ENCODE measurements at regions of chr4 and their contacts with region 1.

Region 1: GRCh38 chr4:42282081-42282901 is 115.0 kb upstream of the SHISA3 start:
- DNase-seq: peak; percentile 44
- H3K4me3 Mint-ChIP-seq: no peak overlapping the region
- H3K27ac Mint-ChIP-seq: no peak overlapping the region
- H3K4me1 Mint-ChIP-seq: no peaks in the 10 kb centered on the region
- H3K27me3 Mint-ChIP-seq: no peaks in the 10 kb centered on the region
- CTCF ChIP-seq: peak; percentile 34

Region 2: DNA sequence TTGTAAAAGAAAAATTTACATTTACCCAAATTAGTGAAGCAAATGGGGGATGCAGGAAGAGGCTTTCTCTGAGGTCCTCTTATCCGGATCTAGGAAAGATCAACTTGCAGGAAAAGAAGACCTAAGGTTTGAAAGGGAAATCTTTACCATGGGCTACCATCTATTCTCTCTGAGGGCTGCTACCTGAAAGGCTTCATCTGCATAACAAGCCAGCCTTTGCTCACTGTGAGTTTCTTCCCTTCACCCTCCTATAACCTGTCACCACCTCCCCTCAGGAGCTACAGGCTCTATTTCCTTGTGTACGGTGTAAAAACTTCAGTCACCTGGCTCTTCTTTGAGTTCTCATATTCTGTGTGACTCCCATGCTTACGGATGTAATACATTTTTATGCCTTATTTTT is 11.2 kb before region 1 on chr4:
- CTCF ChIA-PET with region 1: interaction called, 10 read pairs
- intact Hi-C with region 1: no loop called
- DNase-seq: no peak
- H3K4me3 Mint-ChIP-seq: no peak overlapping the region
- H3K27ac Mint-ChIP-seq: no peak overlapping the region
- H3K4me1 Mint-ChIP-seq: no peaks in the 10 kb centered on the region
- H3K27me3 Mint-ChIP-seq: no peaks in the 10 kb centered on the region
- CTCF ChIP-seq: no peak

Region 3: DNA sequence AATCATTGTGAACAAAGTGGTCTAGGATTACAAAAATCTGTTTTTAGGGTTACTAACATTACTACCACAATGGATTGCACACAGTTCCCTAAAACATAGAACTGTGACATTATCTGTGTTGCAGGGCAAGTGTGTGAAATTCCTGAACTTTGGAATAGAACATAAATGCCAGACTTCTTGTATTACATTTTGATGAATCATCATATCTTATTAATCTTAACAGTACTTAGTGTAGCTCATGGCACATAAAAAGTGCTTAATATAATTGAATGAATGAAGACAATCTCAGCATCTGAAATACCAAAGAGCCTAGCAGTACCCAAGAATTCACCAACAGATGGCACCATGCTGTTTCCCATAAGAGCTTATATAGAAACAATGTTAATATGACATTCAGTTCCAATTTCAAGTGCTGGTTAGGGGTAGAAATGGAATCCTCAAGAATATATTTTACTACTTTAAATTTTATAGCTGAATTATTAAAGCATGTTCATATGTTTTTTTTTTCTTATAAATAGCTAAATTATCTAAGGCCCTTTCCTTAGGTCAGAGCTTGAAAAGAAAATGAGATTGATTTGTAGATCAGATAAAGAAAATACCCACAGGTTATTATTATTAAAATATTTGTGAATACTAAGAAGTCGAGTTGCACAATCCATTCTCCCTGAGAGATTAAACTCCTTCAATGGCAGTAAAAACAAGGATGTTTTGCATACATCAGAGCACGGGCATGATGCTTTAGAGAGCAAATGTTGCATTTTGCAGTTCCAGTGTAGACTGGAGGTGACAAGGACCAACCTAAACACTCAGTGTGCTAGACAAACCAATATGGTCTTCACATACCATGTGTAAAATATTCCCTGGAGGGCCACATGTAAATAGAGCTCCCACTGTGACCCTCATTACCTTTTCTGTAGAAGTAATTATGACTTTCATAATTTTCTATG is 89.3 kb after region 1 on chr4:
- CTCF ChIA-PET with region 1: no interaction called
- intact Hi-C with region 1: loop called (anchors 10 kb)
- DNase-seq: no peak
- H3K4me3 Mint-ChIP-seq: no peak overlapping the region
- H3K27ac Mint-ChIP-seq: no peak overlapping the region
- H3K4me1 Mint-ChIP-seq: no peaks in the 10 kb centered on the region
- H3K27me3 Mint-ChIP-seq: peaks cover 15% of the 10 kb centered on the region
- CTCF ChIP-seq: no peak

Region 4: GRCh38 chr4:42519803-42520417 is 237.6 kb after region 1 on chr4:
- CTCF ChIA-PET with region 1: interaction called, 4 read pairs
- intact Hi-C with region 1: loop called (anchors 1 kb)
- DNase-seq: peak; percentile 57
- H3K4me3 Mint-ChIP-seq: no peak overlapping the region
- H3K27ac Mint-ChIP-seq: no peak overlapping the region
- H3K4me1 Mint-ChIP-seq: no peaks in the 10 kb centered on the region
- H3K27me3 Mint-ChIP-seq: peaks cover 10% of the 10 kb centered on the region
- CTCF ChIP-seq: peak; percentile 25

Measured in Calu3 (cell line).